Gastrocnemius medialis (tissue), 4 donors: ENCODE measurements at regions of chr5 and their contacts with region 1.

Region 1: GRCh38 chr5:90474235-90475109 is at the starts of genes MBLAC2 and POLR3G:
- DNase-seq: peak; percentile 90 to 91
- ATAC-seq: peak; percentile 92 to 97
- H3K4me3 ChIP-seq: peak within 1 kb of the TSS; percentile 76 to 90 (median 82)
- H3K27ac ChIP-seq: peak within 1 kb of the TSS; percentile 82 to 91 (median 84)
- H3K4me1 ChIP-seq: peaks cover 11 to 26% of the 10 kb centered on the region in 2 donors
- H3K27me3 ChIP-seq: no peaks in the 10 kb centered on the region
- CTCF ChIP-seq: peak; percentile 44 to 67 (median 62)
- POLR2A ChIP-seq: peak; percentile 77 to 79
- total RNA-seq, gene MBLAC2: 1.1 to 2.4 (median 1.7) TPM
- total RNA-seq, gene POLR3G: 0.89 to 5.8 (median 3.7) TPM

Region 2: GRCh38 chr5:90409318-90410177 is 64.9 kb before region 1 on chr5 and contains the start of gene CETN3:
- in situ Hi-C with region 1: no loop called
- intact Hi-C with region 1: loop called (anchors 1 kb)
- DNase-seq: peak; percentile 92 to 93
- ATAC-seq: peak; percentile 99
- H3K4me3 ChIP-seq: peak within 1 kb of the TSS; percentile 76 to 97 (median 86)
- H3K27ac ChIP-seq: peak within 1 kb of the TSS; percentile 92 to 97 (median 94)
- H3K4me1 ChIP-seq: peaks cover 12 to 14% of the 10 kb centered on the region in 2 donors
- H3K27me3 ChIP-seq: no peaks in the 10 kb centered on the region
- CTCF ChIP-seq: peak in 1 of 5 experiments; percentile 12
- POLR2A ChIP-seq: peak; percentile 62 to 89
- total RNA-seq, gene CETN3: 1.4 to 4.9 (median 3.2) TPM

Region 3: DNA sequence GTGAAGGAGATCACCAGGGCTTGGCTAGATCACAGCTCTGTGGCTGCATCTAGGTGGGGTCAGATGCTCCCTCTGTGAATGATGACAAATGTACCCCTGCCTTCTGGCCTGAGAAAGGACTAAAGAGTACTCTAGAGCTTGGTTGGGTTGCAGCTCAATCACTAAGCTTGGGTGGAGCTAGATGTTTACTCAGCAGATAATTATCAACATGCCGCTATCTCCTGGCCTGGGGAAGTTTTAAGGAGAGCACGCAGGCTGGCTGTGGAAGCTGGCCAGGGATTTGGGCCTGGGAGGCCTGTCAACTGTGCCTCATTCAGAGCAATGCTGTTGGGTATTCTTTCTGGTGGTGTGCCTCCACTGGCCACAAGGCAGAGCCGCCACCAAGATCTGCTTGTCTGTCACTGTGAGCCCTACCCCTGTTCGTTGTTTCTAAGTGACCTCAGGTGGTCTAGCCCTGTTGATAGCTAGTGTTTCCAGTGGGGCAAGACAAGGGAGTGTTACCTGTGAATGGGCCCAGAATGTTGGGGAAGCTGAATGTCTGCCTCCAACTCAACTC is 265.9 kb after region 1 on chr5:
- in situ Hi-C with region 1: no loop called
- intact Hi-C with region 1: no loop called
- DNase-seq: no peak
- ATAC-seq: no peak
- H3K4me3 ChIP-seq: no peak overlapping the region
- H3K27ac ChIP-seq: no peak overlapping the region
- H3K4me1 ChIP-seq: no peaks in the 10 kb centered on the region
- H3K27me3 ChIP-seq: peaks cover 0 to 4% (median 0%) of the 10 kb centered on the region in 3 donors
- CTCF ChIP-seq: no peak
- POLR2A ChIP-seq: no peak